Panc1 (cell line): ENCODE measurements at regions of chr9 and their contacts with region 1.

Region 1: DNA sequence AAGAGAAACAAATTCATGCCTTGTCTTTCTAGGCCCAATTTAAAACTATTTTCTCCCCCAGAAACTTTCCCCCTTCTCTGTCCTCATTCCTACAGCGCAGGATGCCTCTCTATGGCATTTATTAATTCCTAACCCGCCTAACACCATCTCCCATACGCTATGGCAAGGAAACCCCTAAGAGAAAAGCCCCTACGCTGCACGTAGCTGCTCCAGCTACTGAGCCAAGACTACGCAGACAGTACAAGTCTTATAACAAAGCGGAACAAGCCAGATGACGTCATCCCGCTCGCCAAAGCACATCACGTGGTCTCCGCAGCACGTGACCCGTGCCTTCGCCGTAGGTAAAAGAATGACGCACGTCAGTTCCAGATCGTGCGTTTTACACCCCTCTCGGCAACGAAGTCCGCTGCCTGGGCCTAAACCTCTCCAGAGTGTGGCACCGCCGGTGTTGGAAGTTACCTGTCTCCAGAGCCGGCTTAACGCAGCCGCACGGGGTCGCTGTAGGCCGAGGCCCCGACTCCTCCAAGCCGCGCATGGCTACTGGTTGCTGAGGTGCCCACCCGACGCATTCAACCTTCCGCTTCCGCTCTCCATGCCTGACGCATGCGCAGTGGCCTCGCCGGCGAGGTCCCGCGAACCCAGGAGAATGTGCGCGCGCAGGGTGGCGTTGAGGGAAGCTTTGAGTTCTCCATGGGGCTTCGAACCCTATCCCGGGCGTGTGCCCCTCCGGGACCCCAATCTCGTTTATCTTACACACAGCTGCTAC is at the start of gene TRMO:
- DNase-seq: peak; percentile 92
- ATAC-seq: peak; percentile 92
- H3K4me3 ChIP-seq: peak within 1 kb of the TSS; percentile 49 to 87
- H3K27ac ChIP-seq: peak within 1 kb of the TSS; percentile 92
- H3K4me1 ChIP-seq: peaks cover 7% of the 10 kb centered on the region; the same call in 1 of the 2 replicates
- H3K27me3 ChIP-seq: peaks cover 4% of the 10 kb centered on the region; the same call in 1 of the 2 replicates
- CTCF ChIP-seq: peak; percentile 83
- total RNA-seq, gene TRMO: 10.4 TPM

Region 2: GRCh38 chr9:97830884-97831829 is 91.0 kb before region 1 on chr9:
- CTCF ChIA-PET with region 1: no interaction called
- POLR2A ChIA-PET with region 1: interaction called, 11 read pairs
- in situ Hi-C with region 1: no loop called
- intact Hi-C with region 1: no loop called
- DNase-seq: no peak
- ATAC-seq: no peak
- H3K4me3 ChIP-seq: no peak overlapping the region
- H3K27ac ChIP-seq: no peak overlapping the region
- H3K4me1 ChIP-seq: no peaks in the 10 kb centered on the region
- H3K27me3 ChIP-seq: no peaks in the 10 kb centered on the region
- CTCF ChIP-seq: no peak

Region 3: DNA sequence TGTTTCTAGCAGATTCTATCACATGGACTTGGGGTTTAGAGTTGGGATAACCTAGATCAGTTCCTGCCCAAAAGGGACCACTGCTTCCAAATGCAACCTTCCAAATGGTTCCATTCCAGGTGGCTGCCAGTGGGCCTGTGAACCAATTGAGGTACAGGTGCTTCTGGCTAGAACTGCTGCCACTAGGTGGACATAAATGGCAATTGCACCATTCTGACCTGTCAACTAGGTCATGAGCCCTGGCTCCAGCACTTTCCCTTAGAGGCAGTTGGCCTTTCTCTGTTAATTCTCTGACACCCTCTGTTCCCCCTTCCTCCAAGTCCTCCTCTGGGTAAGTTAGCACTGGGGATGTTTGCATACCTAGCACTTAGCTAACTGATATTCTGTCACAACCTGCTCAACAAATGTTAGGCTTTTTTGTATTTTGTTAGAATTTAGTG is 32.4 kb after region 1 on chr9:
- CTCF ChIA-PET with region 1: interaction called, 3 read pairs
- POLR2A ChIA-PET with region 1: no interaction called
- in situ Hi-C with region 1: no loop called
- intact Hi-C with region 1: loop called (anchors 2 kb)
- DNase-seq: peak; percentile 41
- ATAC-seq: peak; percentile 95
- H3K4me3 ChIP-seq: no peak overlapping the region
- H3K27ac ChIP-seq: no peak overlapping the region
- H3K4me1 ChIP-seq: no peaks in the 10 kb centered on the region
- H3K27me3 ChIP-seq: no peaks in the 10 kb centered on the region
- CTCF ChIP-seq: peak; percentile 78

Region 4: DNA sequence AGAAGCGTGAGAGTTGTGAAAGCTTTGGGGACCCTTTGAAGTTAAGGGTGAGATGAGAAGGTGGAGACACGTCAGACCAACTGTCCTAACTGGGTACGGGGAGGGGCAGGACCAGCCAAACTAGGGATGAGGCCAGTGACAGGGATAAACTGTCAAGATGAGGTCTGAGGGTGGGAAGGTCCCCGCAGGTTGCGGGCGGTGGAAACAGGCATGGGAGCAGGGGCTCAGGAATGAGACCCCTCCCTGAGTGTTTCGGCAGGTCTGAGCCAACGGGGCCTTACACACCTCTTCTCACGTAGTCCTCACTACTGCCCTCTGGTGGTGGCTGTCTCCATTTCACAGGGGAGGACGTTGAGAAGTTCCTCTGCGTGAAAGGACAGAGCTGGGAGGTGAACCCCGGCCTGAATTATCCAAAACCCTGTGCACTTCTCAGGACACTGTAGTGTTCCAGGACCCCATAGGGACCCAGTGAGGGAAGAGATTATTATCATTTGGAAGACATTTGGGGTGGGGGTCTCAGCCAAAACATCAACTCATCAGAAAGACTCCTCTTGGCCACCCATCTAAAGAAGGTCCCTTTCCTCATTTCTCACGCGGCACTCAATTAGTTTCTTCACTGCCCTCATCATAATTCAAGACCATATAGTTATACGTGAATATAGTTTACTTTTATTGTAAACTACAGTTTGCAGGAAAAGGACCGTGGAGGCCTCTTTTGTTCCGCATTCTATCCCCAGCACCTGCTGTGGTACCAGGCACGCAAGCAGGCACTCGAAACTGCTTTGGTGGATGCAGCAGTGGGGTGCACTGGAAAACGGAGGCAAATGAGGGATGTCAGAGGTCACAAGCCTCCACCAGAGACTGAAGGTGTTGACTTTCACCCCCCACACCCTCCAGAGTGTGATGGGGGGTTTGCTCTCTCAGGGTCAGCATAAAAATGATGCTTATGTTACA is 112.7 kb after region 1 on chr9:
- CTCF ChIA-PET with region 1: interaction called, 4 read pairs
- POLR2A ChIA-PET with region 1: no interaction called
- in situ Hi-C with region 1: no loop called
- intact Hi-C with region 1: loop called (anchors 10 kb)
- DNase-seq: peak; percentile 27
- ATAC-seq: peak; percentile 94
- H3K4me3 ChIP-seq: no peak overlapping the region
- H3K27ac ChIP-seq: no peak overlapping the region
- H3K4me1 ChIP-seq: no peaks in the 10 kb centered on the region
- H3K27me3 ChIP-seq: no peaks in the 10 kb centered on the region
- CTCF ChIP-seq: peak; percentile 82